Activated naive CD4-positive, alpha-beta T cell treated with anti-CD3 and anti-CD28 coated beads for 36 hours (primary cell): ENCODE measurements at regions of chr6 and their contacts with region 1.

Region 1: DNA sequence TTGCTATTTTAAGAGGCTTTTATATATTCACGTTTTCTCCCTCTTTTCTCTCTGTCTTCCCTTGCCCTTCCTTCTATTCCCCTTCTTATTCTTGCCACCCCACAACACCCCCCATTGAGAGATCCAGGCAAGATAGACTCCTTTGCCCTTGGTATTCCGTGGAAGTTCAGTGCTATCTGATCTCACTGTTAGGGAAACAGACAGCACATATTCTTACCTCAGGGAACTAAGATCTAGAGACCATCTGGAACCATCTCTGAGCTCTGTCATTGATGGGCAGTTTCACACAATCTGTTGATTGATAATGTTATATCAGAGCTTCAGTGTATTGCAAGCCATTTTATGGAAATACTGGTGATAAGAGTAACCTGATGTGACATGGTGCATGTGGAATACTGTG is 228.8 kb downstream of the ARID1B start:
- DNase-seq: no peak
- H3K4me3 Mint-ChIP-seq: no peak overlapping the region
- H3K27ac Mint-ChIP-seq: no peak overlapping the region
- H3K4me1 Mint-ChIP-seq: peaks cover 63% of the 10 kb centered on the region
- H3K27me3 Mint-ChIP-seq: no peaks in the 10 kb centered on the region

Region 2: DNA sequence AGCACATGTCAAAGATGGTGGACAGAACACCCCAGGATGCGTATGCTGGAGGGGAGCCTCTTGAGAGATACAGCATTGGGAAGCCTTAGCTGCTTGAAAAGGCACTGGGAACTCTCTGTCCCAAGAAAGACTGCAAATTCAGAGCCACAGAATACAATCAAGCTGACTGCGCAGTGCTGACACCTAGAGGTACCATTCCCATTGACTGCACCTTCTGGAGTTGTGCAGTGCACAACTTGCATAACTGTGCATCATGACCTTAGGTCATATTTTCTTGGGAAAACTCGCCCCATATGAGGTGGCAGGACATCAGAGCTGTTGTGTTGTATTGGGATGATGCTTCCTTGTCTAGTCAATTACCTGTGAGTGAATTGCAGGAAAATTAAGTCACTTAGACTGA is 903.8 kb before region 1 on chr6:
- CTCF ChIA-PET with region 1: no interaction called
- intact Hi-C with region 1: no loop called
- DNase-seq: peak; percentile 30
- H3K4me3 Mint-ChIP-seq: no peak overlapping the region
- H3K27ac Mint-ChIP-seq: no peak overlapping the region
- H3K4me1 Mint-ChIP-seq: no peaks in the 10 kb centered on the region
- H3K27me3 Mint-ChIP-seq: no peaks in the 10 kb centered on the region

Region 3: GRCh38 chr6:156992020-156992804 is 13.7 kb before region 1 on chr6:
- CTCF ChIA-PET with region 1: no interaction called
- intact Hi-C with region 1: loop called (anchors 2 kb)
- DNase-seq: no peak
- H3K4me3 Mint-ChIP-seq: no peak overlapping the region
- H3K27ac Mint-ChIP-seq: no peak overlapping the region
- H3K4me1 Mint-ChIP-seq: peaks cover 41% of the 10 kb centered on the region
- H3K27me3 Mint-ChIP-seq: no peaks in the 10 kb centered on the region